Posterior cingulate gyrus (tissue), 11 donors: ENCODE measurements at regions of chr1 and their contacts with region 1.

Region 1: DNA sequence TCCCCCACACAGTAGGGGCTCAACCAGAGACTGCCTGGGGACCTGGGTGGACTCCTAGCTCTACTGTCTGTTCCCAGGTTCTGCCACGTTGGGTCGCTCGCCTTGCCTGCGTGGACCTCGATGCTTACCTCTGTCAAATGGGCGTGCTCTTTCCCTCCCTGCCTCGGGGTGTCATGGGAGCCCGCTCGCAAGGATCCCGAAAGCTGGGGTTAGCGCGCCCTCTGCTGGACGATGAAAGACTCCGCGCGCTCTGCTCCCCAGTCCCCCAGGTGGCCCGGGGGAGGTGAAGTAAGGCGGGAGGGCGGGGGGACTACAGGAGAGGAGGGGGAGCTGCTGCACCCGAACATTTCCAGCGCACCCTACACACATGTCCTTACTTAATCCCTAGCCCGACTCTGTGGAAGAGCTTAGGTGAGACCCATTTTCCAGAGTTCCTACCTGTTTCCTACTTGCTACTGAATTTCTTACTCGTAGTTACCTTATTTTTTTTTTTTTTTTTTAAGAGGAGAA is 2.3 kb upstream of the BSND start:
- DNase-seq: peak in 9 of 10 donors; percentile 18 to 94 (median 67)

Region 2: GRCh38 chr1:54950369-54951163 is 45.8 kb before region 1 on chr1:
- intact Hi-C with region 1: loop called (anchors 1 kb)
- DNase-seq: peak in 8 of 10 donors; percentile 45 to 92 (median 80)

Region 3: GRCh38 chr1:55039342-55040082 is 43.1 kb after region 1 on chr1 and contains the start of gene PCSK9:
- intact Hi-C with region 1: no loop called
- DNase-seq: peak in 1 of 10 donors; percentile 82